CD8-positive, alpha-beta T cell (primary cell): ENCODE measurements at regions of chr7 and their contacts with region 1.

Region 1: GRCh38 chr7:148763622-148764021 is 64.9 kb downstream of the CUL1 start:
- DNase-seq: no peak
- ATAC-seq: no peak
- H3K4me3 ChIP-seq: no peak overlapping the region
- H3K4me3 Mint-ChIP-seq: no peak overlapping the region
- H3K27ac ChIP-seq: no peak overlapping the region
- H3K27ac Mint-ChIP-seq: peak overlapping the region; percentile 72
- H3K4me1 ChIP-seq: no peaks in the 10 kb centered on the region
- H3K4me1 Mint-ChIP-seq: peaks cover 3% of the 10 kb centered on the region
- H3K27me3 ChIP-seq: no peaks in the 10 kb centered on the region
- H3K27me3 Mint-ChIP-seq: no peaks in the 10 kb centered on the region
- CTCF ChIP-seq: no peak

Region 2: DNA sequence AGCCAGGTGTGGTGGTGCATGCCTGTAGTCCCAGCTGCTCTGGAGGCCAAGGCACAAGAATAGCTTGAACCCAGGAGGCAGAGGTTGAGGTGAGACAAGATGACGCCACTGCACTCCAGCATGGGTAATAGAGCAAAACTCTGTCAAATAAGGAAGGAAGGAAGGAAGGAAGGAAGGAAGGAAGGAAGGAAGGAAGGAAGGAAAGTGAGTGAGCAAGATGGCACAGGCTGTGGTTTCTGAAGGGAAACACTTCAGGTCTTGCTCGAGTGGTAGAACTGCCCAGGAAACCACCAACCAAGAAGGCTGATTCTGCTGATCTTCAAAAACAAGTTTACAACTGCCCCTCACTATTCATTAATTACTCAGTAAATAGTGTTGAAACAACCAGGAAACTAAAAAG is 75.3 kb after region 1 on chr7:
- CTCF ChIA-PET with region 1: no interaction called
- POLR2A ChIA-PET with region 1: no interaction called
- intact Hi-C with region 1: loop called in 1 of 2 experiments (anchors 10 kb)
- DNase-seq: peak in 2 of 9 experiments; percentile 48 to 67
- ATAC-seq: peak; percentile 29
- H3K4me3 ChIP-seq: no peak overlapping the region
- H3K4me3 Mint-ChIP-seq: no peak overlapping the region
- H3K27ac ChIP-seq: peak overlapping the region in 1 of 2 experiments; percentile 37
- H3K27ac Mint-ChIP-seq: peak overlapping the region; percentile 41
- H3K4me1 ChIP-seq: peaks cover 5% of the 10 kb centered on the region
- H3K4me1 Mint-ChIP-seq: peaks cover 29% of the 10 kb centered on the region
- H3K27me3 ChIP-seq: no peaks in the 10 kb centered on the region
- H3K27me3 Mint-ChIP-seq: no peaks in the 10 kb centered on the region
- CTCF ChIP-seq: no peak